ENCODE measurements at regions of chr11 and their contacts with region 1.

Region 1: DNA sequence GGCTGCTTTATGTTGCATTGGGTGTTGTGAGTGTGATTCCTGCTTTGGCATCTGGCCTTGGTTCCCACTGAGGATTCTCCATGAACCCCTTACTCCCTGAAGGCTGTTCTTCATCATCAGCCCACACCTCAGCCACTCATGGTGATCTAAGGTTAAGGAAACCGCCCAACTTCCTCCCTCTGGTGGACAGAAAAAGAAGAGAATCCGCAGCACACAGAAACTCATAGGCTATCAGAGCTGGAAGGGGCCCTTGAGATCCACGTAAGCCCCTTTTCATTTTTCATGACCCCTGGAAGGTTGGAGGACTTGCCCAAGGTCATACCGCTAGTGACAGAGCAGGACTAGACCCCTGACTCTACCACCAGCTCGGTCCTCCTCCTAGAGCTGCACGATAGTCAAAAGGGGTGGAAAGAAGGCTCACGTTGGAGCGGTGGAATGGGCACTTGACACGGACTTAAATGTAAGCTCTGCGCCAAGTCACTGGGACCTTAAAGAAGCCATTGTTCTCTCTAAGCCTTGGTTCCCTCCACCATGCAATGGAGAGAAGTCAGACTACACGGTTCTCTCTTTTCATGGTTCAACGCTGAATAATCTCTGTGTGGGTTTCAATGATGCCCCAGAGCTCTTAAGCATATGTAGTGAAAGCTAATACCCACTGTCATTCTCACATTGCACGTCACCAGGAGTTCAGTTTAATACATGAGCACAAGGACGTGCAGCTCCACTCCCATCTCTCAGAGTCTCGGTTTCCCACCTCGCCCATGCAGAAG is 83.6 kb upstream of the CRTAM start:
- DNase-seq: peak; percentile 65
- ATAC-seq: no peak
- H3K4me3 ChIP-seq: no peak overlapping the region
- H3K4me3 Mint-ChIP-seq: no peak overlapping the region
- H3K27ac ChIP-seq: no peak overlapping the region
- H3K27ac Mint-ChIP-seq: no peak overlapping the region
- H3K4me1 ChIP-seq: peaks cover 17 to 28% of the 10 kb centered on the region in 2 donors
- H3K4me1 Mint-ChIP-seq: peaks cover 30% of the 10 kb centered on the region
- H3K27me3 ChIP-seq: peaks cover 0 to 21% (median 4%) of the 10 kb centered on the region in 4 experiments
- H3K27me3 Mint-ChIP-seq: peaks cover 20% of the 10 kb centered on the region
- CTCF ChIP-seq: peak; percentile 71

Region 2: DNA sequence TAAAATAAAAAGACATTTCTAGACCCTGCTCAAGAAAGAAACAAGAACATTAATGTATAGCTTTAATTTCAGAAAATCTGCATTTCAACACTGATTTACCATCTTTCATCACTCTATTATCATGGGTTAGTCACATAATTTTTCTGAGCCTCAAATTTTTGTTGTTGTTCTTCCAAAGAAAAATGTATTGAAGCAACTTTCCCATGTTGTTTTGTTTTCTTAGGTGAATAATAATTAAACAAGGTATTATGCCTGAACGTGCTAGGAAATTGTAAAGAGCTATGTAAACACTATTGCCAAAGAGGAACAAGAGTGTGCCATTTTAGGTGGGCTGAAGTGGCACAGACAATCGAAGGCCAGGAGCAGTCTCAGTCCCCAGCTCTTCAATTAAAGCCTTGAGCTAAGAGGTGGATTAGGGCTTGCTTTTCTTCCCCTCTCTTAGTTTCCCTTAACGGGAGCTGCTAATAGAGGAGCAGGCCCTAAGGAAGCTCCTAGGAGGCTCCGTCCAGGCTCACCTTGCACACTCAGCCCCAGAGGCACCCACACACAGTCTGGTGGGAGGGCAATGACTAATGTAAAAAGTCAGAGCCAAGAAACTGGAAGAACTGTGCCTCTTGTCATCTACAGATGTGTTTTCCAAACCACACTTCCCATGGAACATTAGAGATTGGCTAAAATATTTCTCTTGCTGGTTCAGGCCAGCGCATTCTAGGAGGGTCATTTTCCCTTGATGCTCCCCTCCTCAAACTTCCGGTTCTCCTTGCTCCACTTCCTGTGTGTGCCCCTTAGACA is 108.0 kb before region 1 on chr11:
- CTCF ChIA-PET with region 1: interaction called, 11 read pairs
- POLR2A ChIA-PET with region 1: no interaction called
- intact Hi-C with region 1: no loop called
- DNase-seq: no peak
- ATAC-seq: no peak
- H3K4me3 ChIP-seq: no peak overlapping the region
- H3K4me3 Mint-ChIP-seq: no peak overlapping the region
- H3K27ac ChIP-seq: no peak overlapping the region
- H3K27ac Mint-ChIP-seq: no peak overlapping the region
- H3K4me1 ChIP-seq: no peaks in the 10 kb centered on the region
- H3K4me1 Mint-ChIP-seq: no peaks in the 10 kb centered on the region
- H3K27me3 ChIP-seq: peaks cover 0 to 2% (median 0%) of the 10 kb centered on the region in 4 experiments
- H3K27me3 Mint-ChIP-seq: peaks cover 3% of the 10 kb centered on the region
- CTCF ChIP-seq: no peak

Region 3: GRCh38 chr11:122690801-122691548 is 63.8 kb before region 1 on chr11:
- CTCF ChIA-PET with region 1: interaction called, 41 read pairs
- POLR2A ChIA-PET with region 1: no interaction called
- intact Hi-C with region 1: loop called (anchors 2 kb)
- DNase-seq: no peak
- ATAC-seq: no peak
- H3K4me3 ChIP-seq: peak overlapping the region in 2 of 5 experiments; percentile 7 to 16
- H3K4me3 Mint-ChIP-seq: peak overlapping the region; percentile 48
- H3K27ac ChIP-seq: no peak overlapping the region
- H3K27ac Mint-ChIP-seq: peak overlapping the region; percentile 43
- H3K4me1 ChIP-seq: peaks cover 22 to 29% of the 10 kb centered on the region in 2 donors
- H3K4me1 Mint-ChIP-seq: peaks cover 26% of the 10 kb centered on the region
- H3K27me3 ChIP-seq: peaks cover 0 to 2% (median 0%) of the 10 kb centered on the region in 4 experiments
- H3K27me3 Mint-ChIP-seq: no peaks in the 10 kb centered on the region
- CTCF ChIP-seq: no peak

Region 4: GRCh38 chr11:122717264-122717867 is 37.4 kb before region 1 on chr11:
- CTCF ChIA-PET with region 1: interaction called, 21 read pairs
- POLR2A ChIA-PET with region 1: no interaction called
- intact Hi-C with region 1: loop called (anchors 1 kb)
- DNase-seq: peak; percentile 86
- ATAC-seq: peak; percentile 73
- H3K4me3 ChIP-seq: peak overlapping the region in 2 of 5 experiments; percentile 6 to 12
- H3K4me3 Mint-ChIP-seq: peak overlapping the region; percentile 74
- H3K27ac ChIP-seq: peak overlapping the region; percentile 62 to 76
- H3K27ac Mint-ChIP-seq: peak overlapping the region; percentile 83
- H3K4me1 ChIP-seq: peaks cover 73 to 76% of the 10 kb centered on the region in 2 donors
- H3K4me1 Mint-ChIP-seq: peaks cover 77% of the 10 kb centered on the region
- H3K27me3 ChIP-seq: peaks cover 0 to 11% (median 2%) of the 10 kb centered on the region in 4 experiments
- H3K27me3 Mint-ChIP-seq: peaks cover 6% of the 10 kb centered on the region
- CTCF ChIP-seq: no peak

Region 5: GRCh38 chr11:122781378-122782195 is 26.8 kb after region 1 on chr11:
- CTCF ChIA-PET with region 1: interaction called, 109 read pairs
- POLR2A ChIA-PET with region 1: no interaction called
- intact Hi-C with region 1: loop called (anchors 1 kb)
- DNase-seq: peak; percentile 78
- ATAC-seq: peak; percentile 90
- H3K4me3 ChIP-seq: no peak overlapping the region
- H3K4me3 Mint-ChIP-seq: no peak overlapping the region
- H3K27ac ChIP-seq: no peak overlapping the region
- H3K27ac Mint-ChIP-seq: no peak overlapping the region
- H3K4me1 ChIP-seq: no peaks in the 10 kb centered on the region
- H3K4me1 Mint-ChIP-seq: no peaks in the 10 kb centered on the region
- H3K27me3 ChIP-seq: no peaks in the 10 kb centered on the region
- H3K27me3 Mint-ChIP-seq: no peaks in the 10 kb centered on the region
- CTCF ChIP-seq: peak; percentile 93

Region 6: DNA sequence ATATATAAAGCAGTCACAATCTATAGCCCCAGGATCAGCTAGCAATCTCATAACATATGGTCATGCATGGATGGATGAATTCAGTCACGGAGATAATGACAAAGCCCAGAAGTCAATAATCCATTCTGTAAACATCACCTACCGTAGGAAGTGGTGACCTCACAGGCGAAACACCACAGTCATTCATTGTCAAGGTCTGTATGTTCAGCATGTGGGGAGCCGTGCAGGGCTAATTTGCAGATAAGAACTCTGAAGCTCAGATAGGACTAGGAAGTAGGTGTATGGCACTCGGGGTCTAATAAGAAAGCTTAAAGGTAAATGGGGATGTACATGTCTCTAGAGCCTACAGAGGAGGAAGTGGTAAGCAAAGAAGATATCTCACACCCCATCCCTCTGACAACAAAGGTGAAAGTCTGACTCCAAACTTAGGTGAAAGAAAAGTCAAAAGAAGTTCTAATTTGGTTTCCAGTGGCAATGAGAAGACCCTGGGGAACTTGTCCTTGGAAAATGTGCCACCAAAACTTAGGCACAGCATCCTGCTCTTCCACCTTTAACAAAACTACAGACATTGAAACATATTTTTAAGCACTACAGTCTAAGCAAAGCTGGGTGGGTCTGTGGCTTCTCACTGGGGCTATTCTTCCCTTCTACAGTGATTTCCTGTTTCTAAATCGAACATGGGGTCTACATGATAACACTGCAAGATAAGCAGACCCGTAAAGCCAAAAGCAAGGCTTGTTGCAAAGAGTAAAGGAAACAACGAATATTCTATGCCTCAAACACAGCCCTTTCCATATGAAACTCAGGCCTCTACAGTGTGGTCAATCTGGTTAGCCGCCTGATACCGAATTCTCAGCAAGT is 88.8 kb after region 1 on chr11:
- CTCF ChIA-PET with region 1: no interaction called
- POLR2A ChIA-PET with region 1: no interaction called
- intact Hi-C with region 1: no loop called
- DNase-seq: peak; percentile 72
- ATAC-seq: peak; percentile 90
- H3K4me3 ChIP-seq: peak overlapping the region in 2 of 5 experiments; percentile 29 to 36
- H3K4me3 Mint-ChIP-seq: peak overlapping the region; percentile 69
- H3K27ac ChIP-seq: peak overlapping the region; percentile 42 to 83
- H3K27ac Mint-ChIP-seq: peak overlapping the region; percentile 78
- H3K4me1 ChIP-seq: peaks cover 24 to 35% of the 10 kb centered on the region in 2 donors
- H3K4me1 Mint-ChIP-seq: peaks cover 41% of the 10 kb centered on the region
- H3K27me3 ChIP-seq: no peaks in the 10 kb centered on the region
- H3K27me3 Mint-ChIP-seq: no peaks in the 10 kb centered on the region
- CTCF ChIP-seq: no peak